ENCODE measurements at regions of chr16 and their contacts with region 1.

Region 1: GRCh38 chr16:15548482-15548891 is 94.5 kb downstream of the MARF1 start:
- DNase-seq: no peak
- H3K4me3 ChIP-seq: no peak overlapping the region
- H3K27ac ChIP-seq: no peak overlapping the region
- H3K4me1 ChIP-seq: peaks cover 8% of the 10 kb centered on the region
- H3K27me3 ChIP-seq: no peaks in the 10 kb centered on the region
- CTCF ChIP-seq: no peak
- EP300 ChIP-seq: no peak
- POLR2A ChIP-seq: no peak

Region 2: DNA sequence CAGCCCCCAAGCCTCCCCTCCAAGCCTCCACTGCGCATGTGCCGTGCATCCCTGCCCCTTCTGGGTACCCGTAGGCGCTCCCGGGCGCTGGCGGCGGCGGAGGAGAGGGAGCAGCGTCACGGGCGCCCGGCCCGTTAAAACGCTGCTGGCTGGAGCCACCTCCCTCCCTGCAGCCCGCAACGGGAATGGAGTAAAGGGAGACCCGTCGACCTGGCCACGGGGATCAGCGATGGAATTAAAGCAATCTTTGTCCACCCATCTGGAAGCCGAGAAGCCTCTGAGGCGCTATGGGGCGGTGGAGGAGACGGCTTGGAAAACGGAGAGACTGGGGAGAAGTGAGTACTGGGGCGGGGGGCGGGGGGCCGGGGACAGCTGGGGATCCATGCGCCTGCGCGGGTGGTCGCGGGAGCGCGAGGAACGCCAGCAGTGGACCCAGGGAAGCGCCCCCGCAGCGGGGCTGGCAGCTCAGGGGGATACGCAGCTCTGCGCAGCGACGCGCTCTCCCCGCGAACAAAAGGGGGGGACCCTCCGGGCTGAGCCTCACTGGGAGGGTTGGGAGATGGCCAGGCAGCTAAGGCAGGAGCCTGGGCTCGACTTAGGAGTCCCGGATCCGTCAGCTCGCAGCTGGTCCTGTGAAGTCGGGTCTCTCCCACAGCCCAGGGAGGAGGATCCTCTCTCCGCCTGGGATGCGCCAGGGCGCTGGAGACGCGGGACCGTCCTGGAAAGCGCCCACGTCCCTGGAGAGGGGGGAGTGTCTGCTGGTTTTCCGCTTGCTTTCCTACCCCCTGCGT is 113.9 kb before region 1 on chr16 and contains the start of gene BMERB1:
- intact Hi-C with region 1: loop called in 2 of 4 experiments (anchors 10 kb)
- DNase-seq: peak; percentile 70 to 88 (median 82)
- H3K4me3 ChIP-seq: peak within 1 kb of the TSS; percentile 83
- H3K27ac ChIP-seq: peak within 1 kb of the TSS; percentile 70 to 78
- H3K4me1 ChIP-seq: peaks cover 3% of the 10 kb centered on the region
- H3K27me3 ChIP-seq: no peaks in the 10 kb centered on the region
- CTCF ChIP-seq: no peak
- EP300 ChIP-seq: no peak
- POLR2A ChIP-seq: peak; percentile 34
- total RNA-seq, gene BMERB1: 22.6 to 77.5 (median 66.8) TPM

Region 3: DNA sequence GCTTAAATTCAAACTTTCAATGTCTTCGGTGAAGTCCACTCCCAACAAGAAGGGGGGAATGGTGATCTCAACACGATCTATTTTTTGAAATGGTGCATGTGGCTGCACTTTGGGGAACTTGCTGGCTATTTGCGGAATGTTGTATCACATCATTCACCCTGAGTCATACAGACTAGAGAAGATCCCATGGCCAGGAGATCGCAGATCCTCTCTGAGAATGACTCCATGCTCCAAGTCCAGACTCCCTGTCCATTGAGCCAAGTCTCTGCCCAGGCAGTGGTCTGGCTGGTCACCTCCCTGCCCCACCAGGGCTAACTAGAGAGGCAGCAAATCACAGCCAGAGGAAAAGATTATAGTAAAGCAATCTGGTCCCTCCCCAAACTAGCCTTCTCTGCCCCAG is 1801.7 kb after region 1 on chr16:
- intact Hi-C with region 1: no loop called
- DNase-seq: peak in 1 of 5 donors; percentile 15
- H3K4me3 ChIP-seq: no peak overlapping the region
- H3K27ac ChIP-seq: no peak overlapping the region
- H3K4me1 ChIP-seq: no peaks in the 10 kb centered on the region
- H3K27me3 ChIP-seq: no peaks in the 10 kb centered on the region
- CTCF ChIP-seq: no peak
- EP300 ChIP-seq: no peak
- POLR2A ChIP-seq: no peak

Measured in ovary (tissue), 10 donors.